ENCODE measurements at regions of chr3 and their contacts with region 1.

Region 1: DNA sequence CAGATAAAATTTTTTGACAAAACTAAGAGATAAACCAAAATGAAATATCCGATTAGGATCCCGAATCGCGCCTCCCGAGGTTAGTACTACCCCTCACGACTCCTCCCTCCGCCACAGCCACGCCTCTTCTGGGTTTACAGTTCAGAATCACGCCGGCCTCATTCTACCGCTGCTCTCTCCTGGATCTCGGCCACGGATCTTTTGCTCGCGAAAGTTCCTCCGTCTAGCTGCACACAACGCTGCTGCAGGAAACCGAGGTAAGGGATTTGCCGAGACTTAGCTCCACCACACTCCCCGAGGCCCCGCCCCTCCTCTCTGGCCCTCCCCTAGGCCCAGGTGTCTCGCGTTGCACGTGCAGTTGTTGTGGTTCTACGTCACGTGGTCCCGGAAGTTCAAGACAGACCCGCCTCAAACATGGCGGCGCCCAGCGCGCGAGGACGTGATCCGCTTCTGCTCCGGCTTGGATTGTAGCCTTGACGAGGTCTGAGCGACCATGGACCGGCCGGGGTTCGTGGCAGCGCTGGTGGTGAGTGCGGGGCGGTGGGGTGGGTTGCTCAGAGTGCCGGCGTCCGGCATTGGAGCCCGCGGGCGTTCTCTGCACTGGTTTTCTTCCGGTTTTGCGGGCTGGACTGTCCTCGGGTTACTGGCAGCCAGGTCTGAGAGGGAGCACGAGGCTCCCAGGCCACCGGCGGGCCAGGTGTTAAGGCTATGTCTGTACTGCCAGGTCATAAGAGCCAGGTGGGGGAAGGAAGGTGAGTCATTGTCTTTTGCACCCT is at the start of gene SLC25A26:
- DNase-seq: peak; percentile 99
- H3K4me3 Mint-ChIP-seq: peak within 1 kb of the TSS; percentile 98
- H3K27ac Mint-ChIP-seq: peak within 1 kb of the TSS; percentile 98
- H3K4me1 Mint-ChIP-seq: peaks cover 37% of the 10 kb centered on the region
- H3K27me3 Mint-ChIP-seq: no peaks in the 10 kb centered on the region
- total RNA-seq, gene SLC25A26: 17.7 and 22.1 TPM in 2 replicates

Region 2: GRCh38 chr3:65963787-65964677 is 256.8 kb before region 1 on chr3:
- intact Hi-C with region 1: loop called (anchors 5 kb)
- DNase-seq: no peak
- H3K4me3 Mint-ChIP-seq: peak overlapping the region; percentile 34
- H3K27ac Mint-ChIP-seq: peak overlapping the region; percentile 81
- H3K4me1 Mint-ChIP-seq: peaks cover 11% of the 10 kb centered on the region
- H3K27me3 Mint-ChIP-seq: no peaks in the 10 kb centered on the region

Region 3: DNA sequence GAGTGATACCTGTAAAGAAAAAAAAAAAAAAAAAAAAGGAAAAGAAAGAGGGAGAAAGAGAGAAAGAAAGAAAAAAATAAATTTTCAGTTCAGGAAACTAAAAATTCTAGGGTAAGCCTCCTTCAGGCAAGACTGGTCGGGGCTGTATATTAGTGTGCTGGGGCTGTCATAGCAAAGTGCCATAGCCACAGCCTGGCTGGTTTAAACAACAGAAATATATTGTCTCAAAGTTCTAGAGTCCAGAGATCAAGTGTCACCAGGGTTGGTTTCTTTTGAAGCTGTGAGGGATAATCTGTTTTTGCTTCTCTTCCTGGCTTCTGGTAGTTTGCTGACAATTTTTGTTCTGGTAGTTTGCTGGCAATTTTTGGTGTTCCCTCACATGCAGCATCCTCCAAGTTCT is 48.4 kb before region 1 on chr3:
- intact Hi-C with region 1: no loop called
- DNase-seq: no peak
- H3K4me3 Mint-ChIP-seq: no peak overlapping the region
- H3K27ac Mint-ChIP-seq: no peak overlapping the region
- H3K4me1 Mint-ChIP-seq: no peaks in the 10 kb centered on the region
- H3K27me3 Mint-ChIP-seq: no peaks in the 10 kb centered on the region

Region 4: GRCh38 chr3:66239513-66240123 is 18.8 kb after region 1 on chr3:
- intact Hi-C with region 1: loop called (anchors 2 kb)
- DNase-seq: no peak
- H3K4me3 Mint-ChIP-seq: no peak overlapping the region
- H3K27ac Mint-ChIP-seq: peak overlapping the region; percentile 72
- H3K4me1 Mint-ChIP-seq: peaks cover 16% of the 10 kb centered on the region
- H3K27me3 Mint-ChIP-seq: no peaks in the 10 kb centered on the region

Region 5: DNA sequence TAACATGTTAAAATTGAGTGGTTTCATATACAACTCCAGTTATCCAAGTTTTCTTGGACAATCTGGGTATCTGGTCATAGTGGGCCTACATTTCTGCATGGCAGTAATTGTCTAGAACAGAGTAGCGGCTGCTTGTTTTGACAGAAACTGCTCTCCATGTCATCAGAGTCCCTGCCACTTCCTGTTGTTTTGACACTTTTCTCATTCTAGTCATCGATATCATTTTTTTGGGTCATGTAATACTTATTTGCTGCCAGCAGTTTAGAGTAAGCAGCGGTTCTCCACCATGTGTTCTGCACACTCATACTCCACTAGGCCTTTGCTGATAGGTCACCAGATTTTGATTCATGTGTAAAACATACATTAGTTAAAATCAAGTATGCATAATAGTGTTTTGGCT is 81.5 kb after region 1 on chr3:
- intact Hi-C with region 1: loop called (anchors 2 kb)
- DNase-seq: peak; percentile 80
- H3K4me3 Mint-ChIP-seq: peak overlapping the region; percentile 68
- H3K27ac Mint-ChIP-seq: peak overlapping the region; percentile 95
- H3K4me1 Mint-ChIP-seq: peaks cover 53% of the 10 kb centered on the region
- H3K27me3 Mint-ChIP-seq: no peaks in the 10 kb centered on the region

Region 6: DNA sequence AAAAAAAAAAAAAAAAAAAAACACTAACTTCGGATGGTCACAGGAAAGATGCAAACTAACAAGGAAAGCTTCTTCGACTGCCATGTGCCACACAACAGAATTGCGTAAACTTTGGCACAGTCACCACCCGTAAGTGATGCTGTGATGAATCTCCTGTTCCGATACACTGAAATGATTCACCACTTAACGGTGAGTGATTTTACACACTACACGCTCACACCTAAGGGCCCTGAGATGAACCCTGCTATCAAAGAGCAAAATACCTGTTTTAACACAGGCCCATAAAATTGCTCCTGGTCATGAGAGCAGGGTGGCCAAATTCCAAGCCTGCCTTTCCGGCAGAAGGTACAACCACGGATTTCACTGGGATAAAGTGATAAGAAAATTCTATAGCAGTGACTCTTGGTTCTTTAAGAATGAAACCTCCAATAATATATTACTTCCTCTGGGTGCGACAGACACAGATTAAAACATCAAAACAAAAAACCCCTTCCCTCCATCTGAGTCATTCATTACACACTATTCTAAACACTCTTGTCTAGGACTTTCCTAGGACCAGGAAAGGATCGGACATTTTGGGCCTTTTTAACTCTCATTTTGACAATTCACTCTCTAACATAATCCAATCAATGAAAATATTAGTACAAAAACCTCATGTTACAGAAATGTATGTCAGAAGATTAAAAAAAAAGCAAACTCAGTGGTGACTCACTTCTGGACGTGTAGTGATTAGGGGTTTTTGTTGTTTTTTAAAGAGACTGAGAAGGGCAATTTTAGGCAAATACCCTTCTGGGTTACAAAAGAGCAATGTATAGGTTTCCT is 251.7 kb after region 1 on chr3:
- intact Hi-C with region 1: loop called (anchors 2 kb)
- DNase-seq: peak; percentile 80
- H3K4me3 Mint-ChIP-seq: no peak overlapping the region
- H3K27ac Mint-ChIP-seq: no peak overlapping the region
- H3K4me1 Mint-ChIP-seq: peaks cover 62% of the 10 kb centered on the region
- H3K27me3 Mint-ChIP-seq: no peaks in the 10 kb centered on the region

Region 7: GRCh38 chr3:66998113-66998903 is 777.5 kb after region 1 on chr3 and contains the start of gene KBTBD8:
- intact Hi-C with region 1: loop called (anchors 2 kb)
- DNase-seq: peak; percentile 99
- H3K4me3 Mint-ChIP-seq: peak within 1 kb of the TSS; percentile 89
- H3K27ac Mint-ChIP-seq: peak within 1 kb of the TSS; percentile 92
- H3K4me1 Mint-ChIP-seq: peaks cover 29% of the 10 kb centered on the region
- H3K27me3 Mint-ChIP-seq: peaks cover 24% of the 10 kb centered on the region
- total RNA-seq, gene KBTBD8: 16.8 and 17.0 TPM in 2 replicates

Measured in activated CD4-positive, alpha-beta T cell treated with anti-CD3 and anti-CD28 coated beads, Interleukin-2, amount 10 ng/mL, durations not matched to agents 24 days and 14 days (primary cell).